H1 (cell line): ENCODE measurements at regions of chr12 and their contacts with region 1.

Region 1: GRCh38 chr12:6540181-6540877 is 6.0 kb downstream of the GAPDH start:
- DNase-seq: peak in 1 of 2 experiments; percentile 87
- H3K4me3 ChIP-seq: peak overlapping the region in 1 of 4 experiments; percentile 4; a peak in 2 of 8 replicates
- H3K27ac ChIP-seq: no peak overlapping the region
- H3K4me1 ChIP-seq: peaks cover 0 to 12% (median 10%) of the 10 kb centered on the region in 4 experiments; a peak in 5 of 7 replicates
- H3K27me3 ChIP-seq: no peaks in the 10 kb centered on the region
- CTCF ChIP-seq: no peak
- EP300 ChIP-seq: no peak
- POLR2A ChIP-seq: peak in 1 of 2 experiments; percentile 45; a peak in 1 of 3 replicates
- RAD21 ChIP-seq: no peak

Region 2: DNA sequence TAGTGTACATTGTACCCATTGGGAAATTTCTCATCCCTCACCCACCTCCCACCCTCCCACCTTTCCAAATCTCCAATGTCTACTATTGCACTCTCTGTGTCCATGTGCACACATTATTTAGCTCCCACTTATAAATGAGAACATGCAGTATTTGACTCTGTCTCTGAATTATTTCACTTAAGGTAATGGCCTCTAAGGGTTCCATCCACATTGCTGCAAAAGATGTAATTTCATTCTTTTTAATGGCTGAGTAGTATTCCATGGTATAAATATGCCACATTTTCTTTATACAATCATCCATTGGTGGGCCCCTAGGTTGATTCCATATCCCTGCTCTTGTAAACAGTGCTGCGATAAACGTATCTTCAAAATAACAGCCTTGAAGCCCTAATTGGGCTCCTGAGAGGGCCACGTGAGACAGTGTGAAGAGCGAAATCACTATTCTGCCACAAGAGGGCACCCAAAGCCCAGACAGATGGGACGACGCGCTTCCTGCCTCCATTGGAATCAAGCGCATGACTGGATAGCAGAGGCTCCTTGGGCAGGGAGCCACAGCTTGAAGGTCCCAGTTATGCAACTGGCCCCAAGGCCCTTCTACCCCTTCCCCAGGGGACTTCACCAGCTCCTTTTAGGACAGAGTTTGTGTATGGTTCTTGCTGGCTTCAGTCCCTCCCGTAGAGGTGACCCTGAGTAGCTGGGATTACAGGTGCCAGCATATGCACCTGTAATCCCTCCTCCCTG is 116.9 kb before region 1 on chr12:
- CTCF ChIA-PET with region 1: interaction called, 15 read pairs
- POLR2A ChIA-PET with region 1: interaction called, 38 read pairs
- DNase-seq: peak; percentile 70 to 77
- H3K4me3 ChIP-seq: no peak overlapping the region
- H3K27ac ChIP-seq: no peak overlapping the region
- H3K4me1 ChIP-seq: peaks cover 0 to 4% (median under 1%) of the 10 kb centered on the region in 4 experiments; a peak in 2 of 7 replicates
- H3K27me3 ChIP-seq: no peaks in the 10 kb centered on the region; a peak in 1 of 7 replicates
- CTCF ChIP-seq: peak; percentile 84 to 96 (median 95)
- EP300 ChIP-seq: no peak
- POLR2A ChIP-seq: no peak
- RAD21 ChIP-seq: peak; percentile 97 to 99

Region 3: DNA sequence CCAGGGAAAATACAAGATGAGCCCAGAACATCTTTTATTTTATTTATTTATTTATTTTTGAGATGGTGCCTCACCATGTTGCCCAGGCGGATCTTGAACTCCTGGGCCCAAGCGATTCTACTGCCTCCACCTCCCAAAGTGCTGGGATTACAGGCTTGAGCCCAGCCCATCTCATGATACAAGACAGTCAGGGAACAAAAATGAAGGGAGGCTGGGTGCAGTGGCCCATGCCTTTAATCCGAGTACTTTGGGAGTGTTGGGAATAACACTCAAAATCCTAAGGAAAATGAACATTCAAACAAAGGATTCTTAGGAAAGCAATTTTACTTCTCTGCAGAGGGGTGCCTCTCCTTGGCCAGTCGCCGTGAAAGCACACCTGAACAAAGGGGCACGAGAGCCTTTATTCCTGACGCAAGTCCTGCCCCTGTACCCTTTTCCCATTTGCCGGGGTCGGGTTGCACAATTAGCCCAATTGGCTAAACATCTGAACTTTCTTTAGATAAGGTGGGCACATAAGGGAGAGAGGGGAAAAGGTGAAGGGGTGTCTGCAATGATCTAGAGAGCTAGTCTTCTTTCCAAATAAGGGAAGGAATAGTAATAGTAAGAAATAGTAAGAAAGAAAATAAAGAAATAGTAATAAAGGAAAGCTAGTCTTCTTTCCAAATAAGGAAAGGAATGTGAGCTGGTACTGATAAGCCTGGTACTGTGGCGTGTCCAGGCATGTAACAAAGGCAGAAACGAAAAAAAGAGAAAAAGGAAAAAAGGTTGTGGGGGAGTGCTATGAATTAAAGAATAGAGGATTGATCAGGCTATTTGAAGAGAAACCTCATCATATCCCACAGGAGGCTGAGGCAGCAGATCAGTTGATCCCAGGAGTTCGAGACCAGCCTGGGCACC is 33.0 kb before region 1 on chr12:
- CTCF ChIA-PET with region 1: interaction called, 43 read pairs
- POLR2A ChIA-PET with region 1: interaction called, 37 read pairs
- DNase-seq: peak; percentile 19 to 52
- H3K4me3 ChIP-seq: no peak overlapping the region
- H3K27ac ChIP-seq: peak overlapping the region; percentile 43
- H3K4me1 ChIP-seq: peaks cover 3 to 7% (median 5%) of the 10 kb centered on the region in 4 experiments; a peak in 4 of 7 replicates
- H3K27me3 ChIP-seq: no peaks in the 10 kb centered on the region
- CTCF ChIP-seq: no peak
- EP300 ChIP-seq: no peak
- POLR2A ChIP-seq: peak in 1 of 2 experiments; percentile 70; a peak in 2 of 3 replicates
- RAD21 ChIP-seq: no peak

Region 4: GRCh38 chr12:6575648-6576047 is 35.3 kb after region 1 on chr12:
- CTCF ChIA-PET with region 1: interaction called, 6 read pairs
- POLR2A ChIA-PET with region 1: interaction called, 76 read pairs
- DNase-seq: no peak
- H3K4me3 ChIP-seq: no peak overlapping the region
- H3K27ac ChIP-seq: no peak overlapping the region
- H3K4me1 ChIP-seq: no peaks in the 10 kb centered on the region
- H3K27me3 ChIP-seq: no peaks in the 10 kb centered on the region
- CTCF ChIP-seq: no peak
- EP300 ChIP-seq: no peak
- POLR2A ChIP-seq: no peak
- RAD21 ChIP-seq: no peak

Region 5: DNA sequence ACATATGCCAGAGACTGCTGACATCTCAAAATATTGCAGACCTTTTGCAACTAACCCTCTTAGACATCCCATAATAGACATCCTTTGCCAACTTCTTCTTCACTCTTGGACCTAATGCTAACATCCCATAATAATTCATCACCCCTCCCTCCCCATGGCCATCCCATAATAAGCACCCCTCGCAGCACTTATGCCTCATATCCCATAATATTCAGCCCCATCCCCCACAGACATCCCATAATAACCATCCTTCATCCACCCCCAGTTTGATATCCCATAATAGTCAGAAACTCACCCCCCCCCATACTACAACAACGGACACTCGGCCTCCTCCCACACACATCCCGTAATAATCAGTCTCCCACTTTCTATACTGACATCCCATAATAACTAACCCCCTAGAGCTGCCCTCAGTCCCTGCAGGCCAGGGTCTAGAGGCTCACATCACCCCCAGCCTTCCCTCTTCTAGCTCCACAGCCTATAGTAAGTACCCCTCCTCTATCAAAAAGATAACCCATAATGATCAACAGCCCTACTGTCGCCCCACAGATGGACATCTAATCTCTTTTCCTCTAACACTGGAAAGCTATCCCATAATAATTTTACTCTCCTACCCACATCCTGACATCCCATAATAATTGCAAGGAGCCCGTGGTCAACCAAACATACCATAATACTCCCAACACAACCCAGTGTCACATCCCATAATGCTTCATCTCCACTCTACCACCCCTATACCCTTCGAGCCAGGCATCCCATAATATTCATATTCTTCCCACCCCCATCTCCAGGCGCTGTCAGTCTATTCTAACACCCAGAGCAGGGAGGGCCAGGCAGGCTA is 67.6 kb after region 1 on chr12:
- CTCF ChIA-PET with region 1: interaction called, 8 read pairs
- POLR2A ChIA-PET with region 1: interaction called, 60 read pairs
- DNase-seq: no peak
- H3K4me3 ChIP-seq: peak overlapping the region in 1 of 4 experiments; percentile 17; a peak in 3 of 8 replicates
- H3K27ac ChIP-seq: no peak overlapping the region
- H3K4me1 ChIP-seq: peaks cover 17 to 34% (median 23%) of the 10 kb centered on the region in 4 experiments
- H3K27me3 ChIP-seq: no peaks in the 10 kb centered on the region
- CTCF ChIP-seq: no peak
- EP300 ChIP-seq: no peak
- POLR2A ChIP-seq: no peak
- RAD21 ChIP-seq: no peak